Activated T-helper 1 cell treated with anti-CD3 and anti-CD28 coated beads, Interleukin-12 subunit alpha, Interleukin-12 subunit beta, Interleukin-2, Interleukin-4 antibody, amounts not matched to agents 30 ng/mL and 10 ng/mL and 1 ng/mL, durations not matched to agents 14 hours and 24 hours and 36 hours (primary cell): ENCODE measurements at regions of chr9 and their contacts with region 1.

Region 1: DNA sequence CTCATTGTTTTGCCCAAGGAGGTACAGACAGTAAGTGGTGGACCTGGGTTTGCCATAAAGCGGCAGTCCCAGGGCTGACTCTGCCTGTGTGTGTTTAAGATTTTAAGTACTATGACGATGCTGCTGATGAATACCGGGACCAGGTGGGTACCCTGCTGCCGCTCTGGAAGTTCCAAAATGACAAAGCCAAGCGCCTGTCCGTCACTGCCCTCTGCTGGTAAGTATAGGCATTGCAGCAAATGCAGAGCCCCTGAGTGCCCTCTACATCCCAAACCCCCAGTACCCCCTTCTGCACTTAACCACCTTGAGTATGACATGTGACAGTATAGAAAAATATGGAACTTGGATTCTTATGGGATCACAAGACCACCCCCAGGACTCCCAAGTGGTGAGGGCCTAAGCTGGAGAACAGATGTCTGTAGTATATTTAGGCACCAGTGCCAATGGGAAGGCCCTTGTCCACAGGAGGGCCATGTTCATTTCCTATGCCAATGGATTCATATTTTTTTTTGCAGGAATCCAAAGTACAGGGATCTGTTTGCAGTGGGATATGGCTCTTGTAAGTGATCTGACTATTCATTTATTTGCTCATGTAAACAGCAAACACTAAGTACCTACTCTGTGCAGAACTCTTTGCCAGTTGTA is 22.0 kb downstream of the ENHO start:
- DNase-seq: peak; percentile 65
- H3K4me3 Mint-ChIP-seq: no peak overlapping the region
- H3K27ac Mint-ChIP-seq: peak overlapping the region; percentile 19
- H3K4me1 Mint-ChIP-seq: peaks cover 4% of the 10 kb centered on the region
- H3K27me3 Mint-ChIP-seq: peaks cover 12% of the 10 kb centered on the region

Region 2: GRCh38 chr9:34403554-34404380 is 97.0 kb before region 1 on chr9:
- intact Hi-C with region 1: loop called (anchors 1 kb)
- DNase-seq: peak; percentile 31
- H3K4me3 Mint-ChIP-seq: no peak overlapping the region
- H3K27ac Mint-ChIP-seq: no peak overlapping the region
- H3K4me1 Mint-ChIP-seq: no peaks in the 10 kb centered on the region
- H3K27me3 Mint-ChIP-seq: no peaks in the 10 kb centered on the region

Region 3: GRCh38 chr9:34437006-34437925 is 63.5 kb before region 1 on chr9:
- intact Hi-C with region 1: loop called (anchors 1 kb)
- DNase-seq: peak; percentile 50
- H3K4me3 Mint-ChIP-seq: no peak overlapping the region
- H3K27ac Mint-ChIP-seq: no peak overlapping the region
- H3K4me1 Mint-ChIP-seq: peaks cover 6% of the 10 kb centered on the region
- H3K27me3 Mint-ChIP-seq: no peaks in the 10 kb centered on the region

Region 4: DNA sequence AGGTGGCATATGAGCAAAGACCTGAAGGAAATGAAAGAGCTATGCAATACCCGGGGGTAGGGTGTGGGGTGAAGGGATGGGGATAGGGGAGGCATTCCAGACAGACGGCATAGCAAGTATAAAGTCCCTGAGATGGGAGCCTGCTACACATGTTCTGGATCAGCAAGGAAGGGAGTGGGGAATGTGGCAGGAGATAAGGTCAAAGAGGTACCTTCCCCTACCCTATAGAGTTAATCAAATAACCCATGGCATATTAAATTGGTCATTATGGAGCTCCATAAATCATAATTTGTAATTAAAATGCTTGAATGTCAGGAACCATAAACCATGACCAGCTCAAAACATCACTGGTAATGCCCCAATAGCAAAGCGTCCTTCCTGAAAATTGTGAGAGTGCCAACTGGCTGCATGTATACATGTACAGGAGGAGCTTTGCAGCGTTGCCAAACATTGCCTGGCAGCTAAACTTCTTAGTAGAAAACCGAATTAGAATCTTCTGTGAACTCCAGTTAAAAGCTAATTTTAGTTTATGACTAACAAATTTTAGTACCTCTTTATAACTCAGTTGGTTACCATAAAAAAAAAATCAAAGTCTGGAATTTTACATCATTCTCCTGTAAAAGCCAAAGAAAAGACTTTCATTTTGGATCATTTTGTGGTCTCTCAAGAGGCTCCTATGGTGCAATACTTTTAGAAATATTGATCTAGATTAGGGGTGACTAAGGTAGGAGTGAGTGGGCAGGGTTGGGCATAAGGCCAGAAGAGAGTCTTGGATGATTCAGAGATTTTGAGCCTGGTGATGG is 37.4 kb before region 1 on chr9:
- intact Hi-C with region 1: loop called (anchors 1 kb)
- DNase-seq: no peak
- H3K4me3 Mint-ChIP-seq: no peak overlapping the region
- H3K27ac Mint-ChIP-seq: no peak overlapping the region
- H3K4me1 Mint-ChIP-seq: peaks cover 15% of the 10 kb centered on the region
- H3K27me3 Mint-ChIP-seq: peaks cover 16% of the 10 kb centered on the region

Region 5: GRCh38 chr9:34522971-34523797 is 22.4 kb after region 1 on chr9 and contains the start of gene ENHO:
- intact Hi-C with region 1: loop called (anchors 2 kb)
- DNase-seq: peak; percentile 91
- H3K4me3 Mint-ChIP-seq: peak within 1 kb of the TSS; percentile 73
- H3K27ac Mint-ChIP-seq: peak within 1 kb of the TSS; percentile 75
- H3K4me1 Mint-ChIP-seq: peaks cover 13% of the 10 kb centered on the region
- H3K27me3 Mint-ChIP-seq: peaks cover 49% of the 10 kb centered on the region
- total RNA-seq, gene ENHO: not detected in 2 replicates

Region 6: GRCh38 chr9:34540828-34541227 is 40.1 kb after region 1 on chr9:
- intact Hi-C with region 1: loop called (anchors 5 kb)
- DNase-seq: no peak
- H3K4me3 Mint-ChIP-seq: no peak overlapping the region
- H3K27ac Mint-ChIP-seq: no peak overlapping the region
- H3K4me1 Mint-ChIP-seq: no peaks in the 10 kb centered on the region
- H3K27me3 Mint-ChIP-seq: peaks cover 20% of the 10 kb centered on the region

Region 7: DNA sequence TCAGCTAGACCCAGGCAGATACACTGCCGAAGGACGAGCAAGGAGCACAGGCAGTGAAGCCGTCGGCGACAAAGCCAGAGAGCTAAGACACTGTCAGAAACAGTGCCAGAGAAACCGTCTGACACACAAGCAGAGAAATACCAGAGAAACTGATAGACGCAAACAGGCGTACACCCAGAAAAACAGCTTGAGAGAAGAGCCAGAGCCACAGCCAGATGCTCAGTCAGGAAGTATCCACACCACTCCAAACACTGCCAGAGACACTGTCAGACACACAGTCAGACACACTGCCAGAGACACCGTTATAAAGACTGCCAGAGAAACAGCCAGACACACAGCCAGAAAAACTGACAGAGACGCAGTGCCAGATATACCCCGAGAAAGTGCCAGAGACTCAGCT is 69.6 kb after region 1 on chr9:
- intact Hi-C with region 1: no loop called
- DNase-seq: no peak
- H3K4me3 Mint-ChIP-seq: no peak overlapping the region
- H3K27ac Mint-ChIP-seq: no peak overlapping the region
- H3K4me1 Mint-ChIP-seq: no peaks in the 10 kb centered on the region
- H3K27me3 Mint-ChIP-seq: peaks cover 20% of the 10 kb centered on the region

Region 8: DNA sequence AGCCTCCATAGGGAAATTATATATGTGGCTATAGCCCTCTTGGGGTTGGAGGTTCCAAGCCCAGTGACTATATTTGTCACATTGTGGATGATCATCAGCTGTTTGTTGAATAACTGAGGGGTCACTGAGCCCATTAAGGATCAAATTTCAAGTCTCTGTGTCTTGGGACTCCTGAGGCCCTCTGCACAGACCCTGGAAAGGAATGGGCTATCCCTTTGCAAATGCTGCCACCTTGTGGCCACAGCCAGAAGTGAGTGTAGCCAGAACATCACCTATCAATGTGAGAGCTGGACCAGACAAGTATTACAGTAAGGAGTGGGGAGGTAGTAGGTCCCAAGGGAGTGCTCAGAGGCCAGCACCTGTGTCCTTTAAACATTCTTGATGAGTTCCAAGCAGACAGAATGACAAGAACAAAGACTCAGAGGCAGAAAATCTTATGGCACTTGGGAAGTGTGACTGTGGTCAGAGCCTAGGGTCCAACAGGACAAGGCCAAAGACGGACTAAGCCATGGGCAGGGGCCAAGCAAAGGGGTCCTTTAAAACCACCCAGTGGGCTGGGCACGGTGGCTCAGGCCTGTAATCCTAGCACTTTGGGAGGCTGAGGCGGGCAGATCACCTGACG is 103.0 kb after region 1 on chr9:
- intact Hi-C with region 1: loop called (anchors 1 kb)
- DNase-seq: peak; percentile 68
- H3K4me3 Mint-ChIP-seq: no peak overlapping the region
- H3K27ac Mint-ChIP-seq: no peak overlapping the region
- H3K4me1 Mint-ChIP-seq: no peaks in the 10 kb centered on the region
- H3K27me3 Mint-ChIP-seq: peaks cover 11% of the 10 kb centered on the region